IMR-90 (cell line): ENCODE measurements at regions of chr7 and their contacts with region 1.

Region 1: GRCh38 chr7:107995184-107996071 is 7.5 kb downstream of the LAMB1 start:
- DNase-seq: peak; percentile 85
- ATAC-seq: peak; percentile 74
- H3K4me3 ChIP-seq: no peak overlapping the region
- H3K27ac ChIP-seq: peak overlapping the region; percentile 84
- H3K4me1 ChIP-seq: peaks cover 23% of the 10 kb centered on the region
- H3K27me3 ChIP-seq: no peaks in the 10 kb centered on the region
- CTCF ChIP-seq: no peak
- POLR2A ChIP-seq: no peak
- RAD21 ChIP-seq: no peak

Region 2: DNA sequence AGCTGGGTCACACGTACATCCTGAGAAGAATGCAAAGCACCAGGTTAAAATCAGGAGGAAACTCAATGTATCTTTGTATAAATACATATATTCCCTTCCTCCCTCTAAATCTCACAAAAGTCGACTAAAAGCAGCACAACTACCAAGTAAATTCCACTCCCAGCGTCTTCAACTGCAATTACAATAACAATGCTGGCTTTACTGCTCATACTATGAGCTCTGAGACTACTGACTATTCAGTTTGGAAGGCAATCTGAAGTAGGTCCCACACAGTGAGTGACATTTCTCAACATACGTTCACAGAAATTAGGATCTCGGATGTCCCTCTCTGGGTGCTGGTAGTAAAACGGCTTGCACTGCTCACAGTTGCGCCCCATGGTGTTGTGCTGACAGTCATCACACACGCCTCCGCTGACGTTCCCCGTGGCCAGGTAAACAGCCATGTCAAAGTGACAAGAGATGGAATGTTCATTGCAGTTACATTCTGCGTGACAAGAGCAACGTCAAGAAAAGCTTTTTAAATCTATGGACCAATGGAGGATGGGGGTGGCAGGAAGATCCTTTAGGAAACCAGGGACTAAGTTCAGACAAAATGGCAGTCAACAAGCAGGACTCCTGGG is 19.9 kb before region 1 on chr7:
- CTCF ChIA-PET with region 1: no interaction called
- POLR2A ChIA-PET with region 1: interaction called, 4 read pairs
- dilution Hi-C with region 1: no loop called
- in situ Hi-C with region 1: no loop called
- intact Hi-C with region 1: loop called (anchors 2 kb)
- DNase-seq: no peak
- ATAC-seq: no peak
- H3K4me3 ChIP-seq: no peak overlapping the region
- H3K27ac ChIP-seq: no peak overlapping the region
- H3K4me1 ChIP-seq: peaks cover 7% of the 10 kb centered on the region
- H3K27me3 ChIP-seq: no peaks in the 10 kb centered on the region
- CTCF ChIP-seq: no peak
- POLR2A ChIP-seq: no peak
- RAD21 ChIP-seq: no peak